CD8-positive, alpha-beta T cell (primary cell): ENCODE measurements at regions of chr11 and their contacts with region 1.

Region 1: DNA sequence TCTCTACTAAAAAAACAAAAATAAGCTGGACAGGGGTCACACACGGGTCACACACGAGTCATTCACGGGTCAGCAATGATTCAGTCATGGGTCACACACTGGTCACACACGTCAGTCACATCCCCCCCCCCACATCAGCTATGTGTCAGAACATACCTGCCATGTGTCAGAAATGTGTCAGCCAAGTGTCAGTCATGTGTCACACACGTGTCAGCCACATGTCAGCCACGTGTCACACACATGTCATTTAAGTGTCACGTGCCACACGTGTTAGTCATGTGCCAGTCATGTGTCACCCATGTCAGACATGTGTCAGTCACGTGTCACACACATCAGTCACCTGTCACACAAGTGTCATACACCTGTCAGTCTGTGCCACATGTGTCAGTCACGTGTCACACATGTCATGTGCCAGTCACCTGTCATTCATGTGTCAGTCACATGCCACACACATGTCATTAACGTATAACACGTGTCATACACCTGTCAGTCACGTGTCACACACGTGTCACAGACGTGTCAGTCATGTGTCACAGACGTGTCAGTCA is 28.7 kb upstream of the MMP20 start:
- DNase-seq: peak in 1 of 9 experiments; percentile 5
- ATAC-seq: no peak
- H3K4me3 ChIP-seq: no peak overlapping the region
- H3K4me3 Mint-ChIP-seq: no peak overlapping the region
- H3K27ac ChIP-seq: no peak overlapping the region
- H3K27ac Mint-ChIP-seq: no peak overlapping the region
- H3K4me1 ChIP-seq: no peaks in the 10 kb centered on the region
- H3K4me1 Mint-ChIP-seq: no peaks in the 10 kb centered on the region
- H3K27me3 ChIP-seq: no peaks in the 10 kb centered on the region
- H3K27me3 Mint-ChIP-seq: peaks cover 26% of the 10 kb centered on the region
- CTCF ChIP-seq: no peak

Region 2: GRCh38 chr11:102666331-102666957 is 12.6 kb after region 1 on chr11:
- CTCF ChIA-PET with region 1: interaction called, 14 read pairs
- POLR2A ChIA-PET with region 1: no interaction called
- intact Hi-C with region 1: no loop called
- DNase-seq: peak in 4 of 9 experiments; percentile 13 to 54 (median 26)
- ATAC-seq: no peak
- H3K4me3 ChIP-seq: no peak overlapping the region
- H3K4me3 Mint-ChIP-seq: no peak overlapping the region
- H3K27ac ChIP-seq: no peak overlapping the region
- H3K27ac Mint-ChIP-seq: no peak overlapping the region
- H3K4me1 ChIP-seq: no peaks in the 10 kb centered on the region
- H3K4me1 Mint-ChIP-seq: no peaks in the 10 kb centered on the region
- H3K27me3 ChIP-seq: no peaks in the 10 kb centered on the region
- H3K27me3 Mint-ChIP-seq: peaks cover 4% of the 10 kb centered on the region
- CTCF ChIP-seq: peak; percentile 65